Dendritic cell treated with granulocyte-macrophage colony-stimulating factor and Interleukin-4, amounts not matched to agents 40 ng/mL and 50 ng/mL, for 4 days (primary cell): ENCODE measurements at regions of chr17 and their contacts with region 1.

Region 1: DNA sequence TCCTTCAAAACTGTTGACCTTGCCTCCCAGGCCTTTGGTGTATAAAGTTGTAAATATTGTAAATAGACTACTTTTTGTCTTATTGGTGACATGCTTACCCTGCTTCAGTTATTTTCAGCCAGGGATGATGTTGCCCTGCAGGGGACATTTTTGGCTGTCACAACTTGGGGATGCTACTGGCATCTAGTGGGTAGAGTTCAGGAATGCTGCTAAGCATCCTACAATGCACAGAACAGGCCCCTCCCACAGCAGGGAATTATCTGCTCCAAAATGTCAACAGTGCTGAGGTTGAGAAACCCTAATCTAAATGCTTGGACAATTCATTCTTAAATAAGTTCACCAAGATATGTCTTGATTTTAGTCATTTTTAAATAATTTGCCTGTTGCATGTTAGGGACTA is 459.8 kb downstream of the PMP22 start:
- H3K4me3 Mint-ChIP-seq: no peak overlapping the region
- H3K27ac Mint-ChIP-seq: no peak overlapping the region
- H3K4me1 Mint-ChIP-seq: peaks cover 8% of the 10 kb centered on the region
- H3K27me3 Mint-ChIP-seq: no peaks in the 10 kb centered on the region

Region 2: DNA sequence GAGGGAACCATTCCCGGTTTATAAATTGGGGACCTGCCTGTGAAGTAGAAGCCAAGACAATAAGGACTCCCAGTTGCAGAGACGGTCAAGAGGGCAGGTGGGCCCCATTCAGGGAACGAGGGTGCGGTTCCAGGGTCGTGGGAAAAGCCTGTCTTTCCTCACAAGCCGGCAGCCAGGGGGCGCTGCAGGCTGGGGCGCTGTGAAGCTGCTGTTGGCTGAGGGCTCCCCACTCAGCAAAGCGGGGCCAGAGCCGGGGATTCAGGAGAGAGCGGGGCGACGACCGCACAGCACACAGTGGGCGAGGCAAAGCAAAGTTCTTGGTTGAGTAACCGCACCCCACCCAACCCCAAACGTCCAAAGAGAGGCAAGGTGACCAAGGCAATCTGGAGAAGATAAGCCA is 593.5 kb before region 1 on chr17:
- intact Hi-C with region 1: loop called (anchors 10 kb)
- H3K4me3 Mint-ChIP-seq: no peak overlapping the region
- H3K27ac Mint-ChIP-seq: no peak overlapping the region
- H3K4me1 Mint-ChIP-seq: peaks cover 29% of the 10 kb centered on the region
- H3K27me3 Mint-ChIP-seq: peaks cover 2% of the 10 kb centered on the region